ENCODE measurements at regions of chr14 and their contacts with region 1.

Region 1: GRCh38 chr14:91418387-91419043 is 895 bp upstream of the CCDC88C start:
- DNase-seq: peak; percentile 42
- H3K4me3 ChIP-seq: peak overlapping the region in 2 of 3 experiments; percentile 25 to 54
- H3K27ac ChIP-seq: no peak overlapping the region
- H3K4me1 ChIP-seq: peaks cover 11% of the 10 kb centered on the region
- H3K27me3 ChIP-seq: no peaks in the 10 kb centered on the region
- CTCF ChIP-seq: peak; percentile 94 to 95

Region 2: GRCh38 chr14:91305650-91306431 is 112.7 kb before region 1 on chr14:
- CTCF ChIA-PET with region 1: no interaction called
- dilution Hi-C with region 1: loop called (anchors 5 kb)
- in situ Hi-C with region 1: no loop called
- intact Hi-C with region 1: no loop called
- DNase-seq: no peak
- H3K4me3 ChIP-seq: no peak overlapping the region
- H3K27ac ChIP-seq: no peak overlapping the region
- H3K4me1 ChIP-seq: no peaks in the 10 kb centered on the region
- H3K27me3 ChIP-seq: no peaks in the 10 kb centered on the region
- CTCF ChIP-seq: no peak

Region 3: GRCh38 chr14:91332151-91332985 is 86.1 kb before region 1 on chr14:
- CTCF ChIA-PET with region 1: interaction called, 3 read pairs
- dilution Hi-C with region 1: no loop called
- in situ Hi-C with region 1: loop called in 1 of 2 experiments (anchors 10 kb)
- intact Hi-C with region 1: no loop called
- DNase-seq: no peak
- H3K4me3 ChIP-seq: no peak overlapping the region
- H3K27ac ChIP-seq: no peak overlapping the region
- H3K4me1 ChIP-seq: no peaks in the 10 kb centered on the region
- H3K27me3 ChIP-seq: no peaks in the 10 kb centered on the region
- CTCF ChIP-seq: no peak

Region 4: DNA sequence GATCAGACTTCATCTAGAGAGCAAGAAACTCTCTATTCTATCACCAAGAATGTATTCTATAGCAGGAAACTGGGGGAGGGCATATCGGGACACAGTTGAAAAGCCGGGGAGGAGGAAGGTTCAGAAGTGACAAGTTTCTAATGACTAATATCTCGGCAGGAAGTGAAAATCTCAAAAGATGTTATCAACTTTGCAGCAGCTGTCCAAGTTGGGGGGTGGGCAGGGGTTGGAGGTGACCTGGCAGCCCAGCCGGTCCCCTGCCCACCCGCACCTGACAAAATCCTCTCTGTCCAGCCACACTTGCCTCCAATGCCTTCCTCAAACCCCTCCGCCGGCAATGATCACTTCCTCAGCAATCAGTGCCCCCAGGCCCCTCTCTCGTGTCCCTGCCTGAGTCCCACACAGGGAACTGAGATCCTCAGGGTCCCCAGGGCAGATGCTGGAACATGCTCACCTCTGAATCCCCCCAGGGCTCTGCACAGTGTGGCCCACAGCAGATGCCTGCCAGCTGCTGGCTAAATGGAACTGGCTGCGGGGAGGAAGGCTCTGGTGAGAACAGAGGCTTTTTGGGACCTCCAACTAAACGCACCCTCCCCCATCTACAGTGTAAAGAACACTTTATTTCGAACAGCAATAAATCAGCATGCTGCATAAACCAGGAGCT is 44.8 kb before region 1 on chr14:
- CTCF ChIA-PET with region 1: no interaction called
- dilution Hi-C with region 1: no loop called
- in situ Hi-C with region 1: no loop called
- intact Hi-C with region 1: loop called (anchors 5 kb)
- DNase-seq: no peak
- H3K4me3 ChIP-seq: no peak overlapping the region
- H3K27ac ChIP-seq: no peak overlapping the region
- H3K4me1 ChIP-seq: peaks cover 12% of the 10 kb centered on the region
- H3K27me3 ChIP-seq: no peaks in the 10 kb centered on the region
- CTCF ChIP-seq: no peak

Measured in mammary epithelial cell (primary cell).